ENCODE measurements at regions of chr14 and their contacts with region 1.

Region 1: GRCh38 chr14:50344116-50344775 is 32.1 kb downstream of the DMAC2L start:
- DNase-seq: peak; percentile 47
- H3K4me3 Mint-ChIP-seq: peak overlapping the region; percentile 30
- H3K27ac Mint-ChIP-seq: peak overlapping the region; percentile 69
- H3K4me1 Mint-ChIP-seq: peaks cover 32% of the 10 kb centered on the region
- H3K27me3 Mint-ChIP-seq: peaks cover 18% of the 10 kb centered on the region

Region 2: DNA sequence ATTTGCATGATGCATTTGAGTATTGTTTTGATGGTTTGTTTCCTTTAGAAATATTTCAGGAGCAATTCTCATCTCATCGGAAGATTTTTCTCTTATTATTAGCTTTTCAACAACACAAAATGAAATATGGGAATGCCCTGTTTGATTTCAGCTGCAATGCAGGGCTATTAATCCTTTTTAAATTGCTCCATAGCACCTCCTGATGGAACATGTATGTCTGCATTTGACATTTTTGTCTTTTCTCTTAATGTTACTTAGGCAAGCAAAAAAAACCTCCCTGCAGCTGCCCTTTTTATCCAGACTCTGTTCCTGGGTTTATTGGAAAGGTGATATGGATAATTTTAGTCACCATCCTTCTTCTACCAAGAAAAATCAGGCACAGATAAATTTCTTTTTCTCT is 1653.9 kb before region 1 on chr14:
- intact Hi-C with region 1: no loop called
- DNase-seq: no peak
- H3K4me3 Mint-ChIP-seq: no peak overlapping the region
- H3K27ac Mint-ChIP-seq: no peak overlapping the region
- H3K4me1 Mint-ChIP-seq: no peaks in the 10 kb centered on the region
- H3K27me3 Mint-ChIP-seq: no peaks in the 10 kb centered on the region

Region 3: GRCh38 chr14:50333006-50333509 is 11.2 kb before region 1 on chr14:
- intact Hi-C with region 1: no loop called
- DNase-seq: no peak
- H3K4me3 Mint-ChIP-seq: no peak overlapping the region
- H3K27ac Mint-ChIP-seq: no peak overlapping the region
- H3K4me1 Mint-ChIP-seq: peaks cover 15% of the 10 kb centered on the region
- H3K27me3 Mint-ChIP-seq: no peaks in the 10 kb centered on the region

Region 4: DNA sequence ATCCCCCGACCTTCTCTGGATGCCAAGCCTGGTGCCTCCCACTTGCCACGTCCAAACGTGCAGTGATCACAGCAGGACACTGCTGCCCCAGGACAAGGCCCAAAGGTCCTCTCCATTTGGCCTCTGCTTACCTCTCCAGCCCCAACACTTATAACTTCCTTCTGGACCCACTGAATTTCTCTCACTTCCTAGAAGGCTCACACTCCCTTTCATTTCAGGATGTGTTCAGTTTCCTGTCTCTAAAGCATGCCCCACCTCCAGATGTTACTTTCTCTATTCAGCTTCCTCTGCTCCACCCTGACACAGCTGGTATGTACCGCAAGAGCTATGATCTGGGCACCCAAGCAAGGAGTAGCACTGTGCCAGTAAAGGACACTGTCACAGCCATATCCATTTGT is 19.5 kb after region 1 on chr14:
- intact Hi-C with region 1: loop called (anchors 1 kb)
- DNase-seq: peak; percentile 46
- H3K4me3 Mint-ChIP-seq: peak overlapping the region; percentile 84
- H3K27ac Mint-ChIP-seq: peak overlapping the region; percentile 94
- H3K4me1 Mint-ChIP-seq: peaks cover 27% of the 10 kb centered on the region
- H3K27me3 Mint-ChIP-seq: no peaks in the 10 kb centered on the region

Region 5: DNA sequence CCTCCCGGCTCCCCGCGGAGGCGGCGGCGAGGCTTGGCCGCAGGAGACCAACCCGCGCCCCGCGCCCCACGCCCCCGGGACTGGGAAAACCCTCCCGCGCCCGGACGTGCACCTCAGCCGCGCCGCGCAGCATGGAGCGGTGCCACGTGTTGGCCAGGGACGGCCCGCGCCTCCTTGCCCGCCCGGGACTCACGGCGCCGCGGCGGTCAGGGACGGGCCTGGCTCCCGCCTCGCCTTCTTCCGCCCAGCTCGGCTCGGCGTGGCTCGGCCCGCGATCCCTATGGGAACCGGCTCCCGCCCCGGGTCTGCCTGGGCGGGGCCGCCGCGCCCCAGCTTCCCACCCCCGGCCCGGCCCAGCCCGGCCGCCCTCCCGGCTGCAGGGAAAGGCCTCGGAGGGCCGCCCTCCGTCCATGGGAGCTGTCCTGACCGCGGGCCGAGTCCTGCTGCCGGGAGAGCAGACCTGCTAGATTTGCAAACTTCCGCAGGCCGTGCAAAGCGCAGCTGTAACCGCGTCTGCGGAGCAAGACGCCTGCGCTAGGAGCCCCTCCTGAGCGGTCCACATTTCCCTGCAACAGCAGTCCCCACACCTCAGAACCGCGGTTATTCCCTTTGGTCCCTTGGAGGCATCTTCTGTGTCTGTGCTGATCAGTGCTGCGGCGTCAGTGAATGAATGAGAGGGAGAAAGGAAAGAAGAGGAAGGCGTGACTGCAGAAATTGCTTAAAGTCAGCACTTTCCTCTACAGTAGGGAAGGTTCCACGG is 52.6 kb after region 1 on chr14 and contains the start of gene CDKL1:
- intact Hi-C with region 1: loop called (anchors 1 kb)
- DNase-seq: peak; percentile 22
- H3K4me3 Mint-ChIP-seq: peak within 1 kb of the TSS; percentile 85
- H3K27ac Mint-ChIP-seq: peak within 1 kb of the TSS; percentile 79
- H3K4me1 Mint-ChIP-seq: peaks cover 14% of the 10 kb centered on the region
- H3K27me3 Mint-ChIP-seq: peaks cover 25% of the 10 kb centered on the region
- total RNA-seq, gene CDKL1: 2.4 and 2.5 TPM in 2 replicates

Region 6: DNA sequence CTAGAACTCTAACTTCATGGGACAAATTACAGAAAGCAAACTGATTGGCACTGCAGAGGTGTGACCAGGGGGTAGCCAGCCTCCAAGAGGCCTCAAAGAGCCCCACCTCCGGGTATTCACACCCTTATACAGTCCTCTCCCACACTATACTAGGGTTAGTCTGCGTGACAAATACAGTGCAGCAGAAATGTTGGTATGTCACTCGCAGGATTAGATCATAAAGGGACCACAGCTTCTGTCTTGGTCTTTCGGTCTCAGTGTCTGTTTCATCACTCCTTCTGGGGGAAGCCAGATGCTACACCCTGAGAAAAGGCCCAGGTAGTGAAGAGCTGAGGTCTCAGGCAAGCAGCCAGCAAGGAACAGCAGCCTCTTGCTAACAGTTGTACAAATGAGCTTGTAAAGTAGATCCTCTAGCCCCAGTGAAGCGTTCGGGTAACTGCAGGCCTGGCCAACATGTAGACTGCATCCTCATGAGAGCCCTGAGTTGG is 392.7 kb after region 1 on chr14:
- intact Hi-C with region 1: loop called (anchors 1 kb)
- DNase-seq: peak; percentile 18
- H3K4me3 Mint-ChIP-seq: no peak overlapping the region
- H3K27ac Mint-ChIP-seq: peak overlapping the region; percentile 87
- H3K4me1 Mint-ChIP-seq: peaks cover 45% of the 10 kb centered on the region
- H3K27me3 Mint-ChIP-seq: no peaks in the 10 kb centered on the region

Measured in activated T-helper 1 cell treated with anti-CD3 and anti-CD28 coated beads, Interleukin-12 subunit alpha, Interleukin-12 subunit beta, Interleukin-2, Interleukin-4 antibody, amounts not matched to agents 30 ng/mL and 10 ng/mL and 1 ng/mL, durations not matched to agents 14 hours and 24 hours and 36 hours (primary cell).